Activated CD4-positive, alpha-beta memory T cell treated with anti-CD3 and anti-CD28 coated beads, Interleukin-2, amount 10 ng/mL, durations not matched to agents 7 days and 5 days (primary cell): ENCODE measurements at regions of chr11 and their contacts with region 1.

Region 1: GRCh38 chr11:119108146-119108856 is 1.2 kb downstream of the C2CD2L start:
- DNase-seq: peak; percentile 55
- H3K4me3 Mint-ChIP-seq: peak overlapping the region; percentile 88
- H3K27ac Mint-ChIP-seq: peak overlapping the region; percentile 77
- H3K4me1 Mint-ChIP-seq: peaks cover 49% of the 10 kb centered on the region
- H3K27me3 Mint-ChIP-seq: no peaks in the 10 kb centered on the region

Region 2: GRCh38 chr11:119084663-119085436 is 23.5 kb before region 1 on chr11 and contains the start of gene HMBS:
- CTCF ChIA-PET with region 1: no interaction called
- POLR2A ChIA-PET with region 1: interaction called, 43 read pairs
- DNase-seq: peak; percentile 89
- H3K4me3 Mint-ChIP-seq: peak within 1 kb of the TSS; percentile 98
- H3K27ac Mint-ChIP-seq: peak within 1 kb of the TSS; percentile 91
- H3K4me1 Mint-ChIP-seq: peaks cover 47% of the 10 kb centered on the region
- H3K27me3 Mint-ChIP-seq: no peaks in the 10 kb centered on the region
- total RNA-seq, gene HMBS: 17.3 to 18.8 TPM